ENCODE measurements at regions of chr15 and their contacts with region 1.

Region 1: GRCh38 chr15:88657326-88658069 is 18.7 kb downstream of the ISG20 start:
- DNase-seq: peak; percentile 47 to 63 (median 57)
- ATAC-seq: peak; percentile 52
- H3K4me3 ChIP-seq: no peak overlapping the region
- H3K27ac ChIP-seq: no peak overlapping the region
- H3K4me1 ChIP-seq: peaks cover 21% of the 10 kb centered on the region
- H3K27me3 ChIP-seq: no peaks in the 10 kb centered on the region
- CTCF ChIP-seq: peak; percentile 61 to 81 (median 75)
- POLR2A ChIP-seq: no peak

Region 2: DNA sequence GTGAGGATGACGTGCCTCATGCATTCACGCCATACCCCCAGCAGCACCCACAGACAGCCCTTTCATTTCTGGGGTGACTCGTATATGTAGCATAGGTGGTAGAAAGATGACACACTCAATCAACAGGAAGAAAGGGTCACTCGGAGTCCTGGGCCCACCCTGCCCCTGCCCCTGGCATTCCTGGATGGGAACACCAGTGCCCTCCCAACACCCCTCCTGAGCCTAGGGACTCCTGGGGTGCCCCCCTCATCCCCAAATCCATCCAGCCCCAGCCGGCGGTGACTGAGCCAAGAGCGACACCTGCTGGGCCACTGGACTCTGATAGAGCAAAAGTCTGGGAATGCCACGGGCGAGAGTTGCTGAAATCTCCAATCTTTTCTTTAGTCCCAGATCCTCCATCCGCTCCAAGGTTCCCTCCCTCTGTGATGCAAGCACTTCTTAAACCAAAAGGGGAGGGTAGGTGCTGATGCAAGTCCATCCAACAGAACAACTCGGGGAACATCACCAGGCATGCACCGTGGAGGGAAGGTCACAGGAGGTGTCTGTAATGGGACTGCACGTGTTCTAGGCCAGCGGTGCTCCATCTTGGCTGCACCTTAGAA is 176.8 kb after region 1 on chr15:
- intact Hi-C with region 1: loop called (anchors 10 kb)
- DNase-seq: peak; percentile 23 to 50 (median 38)
- ATAC-seq: no peak
- H3K4me3 ChIP-seq: no peak overlapping the region
- H3K27ac ChIP-seq: no peak overlapping the region
- H3K4me1 ChIP-seq: no peaks in the 10 kb centered on the region
- H3K27me3 ChIP-seq: no peaks in the 10 kb centered on the region
- CTCF ChIP-seq: peak; percentile 26 to 65 (median 52)
- POLR2A ChIP-seq: no peak

Region 3: GRCh38 chr15:88844749-88845386 is 187.4 kb after region 1 on chr15:
- intact Hi-C with region 1: no loop called
- DNase-seq: no peak
- ATAC-seq: no peak
- H3K4me3 ChIP-seq: no peak overlapping the region
- H3K27ac ChIP-seq: no peak overlapping the region
- H3K4me1 ChIP-seq: no peaks in the 10 kb centered on the region
- H3K27me3 ChIP-seq: no peaks in the 10 kb centered on the region
- CTCF ChIP-seq: no peak
- POLR2A ChIP-seq: no peak